Mammary epithelial cell (primary cell): ENCODE measurements at regions of chr2 and their contacts with region 1.

Region 1: DNA sequence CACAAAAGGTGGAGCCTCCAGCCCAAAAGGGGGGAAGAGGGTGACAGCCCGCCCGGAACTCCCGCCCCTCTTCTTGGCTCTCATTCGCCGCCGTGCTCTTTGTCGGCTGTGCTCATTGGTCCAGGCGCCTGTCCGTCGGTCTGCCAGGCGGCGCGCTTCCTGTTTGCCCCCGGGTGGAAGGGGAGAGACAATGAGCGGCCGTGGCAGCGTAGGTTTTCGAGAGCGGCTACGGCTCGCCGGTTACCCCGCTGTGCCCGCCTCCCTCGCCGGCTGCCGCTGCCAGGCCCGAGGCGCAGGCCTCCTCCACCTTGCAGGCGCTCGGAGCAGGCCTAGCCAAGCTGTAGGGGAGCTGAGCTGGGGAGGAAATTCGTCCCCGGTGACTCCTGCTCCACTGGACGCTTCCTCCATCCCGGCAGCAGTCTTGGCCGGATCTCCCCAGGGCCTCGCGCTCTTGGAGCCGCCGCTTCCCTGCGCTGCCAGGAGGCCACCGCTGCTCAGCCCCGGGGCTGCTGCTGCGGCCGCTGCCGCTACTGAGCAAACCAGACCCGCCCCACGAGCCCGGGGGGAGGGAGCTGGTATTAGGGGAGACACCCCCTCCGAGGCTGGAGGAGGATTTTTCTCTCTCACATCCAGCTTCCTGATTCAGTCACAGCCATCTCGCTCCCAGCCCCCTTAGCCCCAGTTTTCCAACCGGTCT is at the start of gene SP3:
- DNase-seq: peak; percentile 97
- H3K4me3 ChIP-seq: peak within 1 kb of the TSS; percentile 73 to 96 (median 94)
- H3K27ac ChIP-seq: peak within 1 kb of the TSS; percentile 81
- H3K4me1 ChIP-seq: peaks cover 19% of the 10 kb centered on the region
- H3K27me3 ChIP-seq: no peaks in the 10 kb centered on the region
- CTCF ChIP-seq: no peak
- total RNA-seq, gene SP3: 64.1 to 79.5 TPM

Region 2: GRCh38 chr2:173708806-173709205 is 256.7 kb before region 1 on chr2:
- CTCF ChIA-PET with region 1: no interaction called
- dilution Hi-C with region 1: no loop called
- in situ Hi-C with region 1: no loop called
- intact Hi-C with region 1: no loop called
- DNase-seq: no peak
- H3K4me3 ChIP-seq: no peak overlapping the region
- H3K27ac ChIP-seq: no peak overlapping the region
- H3K4me1 ChIP-seq: no peaks in the 10 kb centered on the region
- H3K27me3 ChIP-seq: no peaks in the 10 kb centered on the region
- CTCF ChIP-seq: no peak

Region 3: DNA sequence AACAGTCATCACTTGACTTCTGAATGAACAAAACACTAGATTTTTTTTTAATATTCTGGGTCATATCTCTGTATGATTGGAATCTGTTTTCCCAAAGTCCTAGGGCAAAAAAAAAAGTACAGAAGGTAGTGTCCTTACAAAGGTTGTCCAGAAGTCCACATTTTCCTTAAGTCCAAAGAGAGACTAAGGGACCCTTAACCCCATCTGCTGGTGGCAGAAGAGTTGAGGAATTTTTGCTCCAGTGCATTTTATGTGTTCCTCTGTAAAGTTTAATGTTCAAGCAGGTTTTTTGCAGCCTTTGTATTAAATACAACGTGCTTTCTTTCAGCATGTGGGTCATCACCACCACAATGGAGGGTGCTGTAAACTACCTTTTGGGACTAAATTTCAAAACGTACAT is 216.2 kb before region 1 on chr2:
- CTCF ChIA-PET with region 1: no interaction called
- dilution Hi-C with region 1: no loop called
- in situ Hi-C with region 1: no loop called
- intact Hi-C with region 1: loop called (anchors 5 kb)
- DNase-seq: peak; percentile 6
- H3K4me3 ChIP-seq: no peak overlapping the region
- H3K27ac ChIP-seq: no peak overlapping the region
- H3K4me1 ChIP-seq: no peaks in the 10 kb centered on the region
- H3K27me3 ChIP-seq: no peaks in the 10 kb centered on the region
- CTCF ChIP-seq: peak in 1 of 2 donors; percentile 52

Region 4: DNA sequence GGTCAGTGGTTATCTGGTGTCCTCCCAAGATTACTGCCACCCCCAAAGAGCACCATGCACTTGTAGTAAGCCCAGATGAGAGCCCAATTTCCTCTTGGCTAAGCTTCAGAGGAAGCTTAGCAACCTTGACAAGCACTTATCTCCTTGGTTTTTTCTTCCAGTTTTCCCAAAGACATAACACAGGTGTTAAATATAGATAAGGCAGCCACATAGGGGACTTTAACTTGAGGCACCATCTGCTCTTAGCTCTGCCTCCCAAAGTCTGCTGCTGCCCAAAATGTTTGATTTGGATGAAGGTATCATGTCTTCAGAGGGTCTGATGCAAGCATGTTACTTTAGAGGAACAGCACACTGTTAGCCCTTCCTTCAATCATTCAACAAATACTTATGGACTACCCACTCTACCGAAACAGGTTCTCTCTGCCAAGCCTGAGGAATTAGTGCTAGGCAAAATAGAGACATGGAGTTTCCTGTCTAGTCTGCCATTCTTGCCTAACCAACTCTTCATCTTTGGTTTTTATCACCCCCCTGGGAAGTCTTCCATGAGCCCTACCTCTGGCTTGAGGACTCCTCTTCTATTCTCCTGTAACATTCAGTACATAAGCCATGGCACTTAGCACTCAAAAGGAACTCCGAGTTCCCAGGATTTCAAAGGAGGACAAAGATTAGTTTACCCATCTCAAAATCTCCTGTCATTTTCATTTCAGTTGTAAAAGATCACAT is 74.0 kb before region 1 on chr2:
- CTCF ChIA-PET with region 1: no interaction called
- dilution Hi-C with region 1: no loop called
- in situ Hi-C with region 1: no loop called
- intact Hi-C with region 1: loop called (anchors 5 kb)
- DNase-seq: no peak
- H3K4me3 ChIP-seq: no peak overlapping the region
- H3K27ac ChIP-seq: no peak overlapping the region
- H3K4me1 ChIP-seq: no peaks in the 10 kb centered on the region
- H3K27me3 ChIP-seq: no peaks in the 10 kb centered on the region
- CTCF ChIP-seq: no peak

Region 5: GRCh38 chr2:173948842-173949241 is 16.6 kb before region 1 on chr2:
- CTCF ChIA-PET with region 1: no interaction called
- dilution Hi-C with region 1: no loop called
- in situ Hi-C with region 1: no loop called
- intact Hi-C with region 1: loop called (anchors 2 kb)
- DNase-seq: no peak
- H3K4me3 ChIP-seq: no peak overlapping the region
- H3K27ac ChIP-seq: no peak overlapping the region
- H3K4me1 ChIP-seq: no peaks in the 10 kb centered on the region
- H3K27me3 ChIP-seq: no peaks in the 10 kb centered on the region
- CTCF ChIP-seq: no peak

Region 6: GRCh38 chr2:173978447-173978846 is 13.0 kb after region 1 on chr2:
- CTCF ChIA-PET with region 1: no interaction called
- dilution Hi-C with region 1: no loop called
- in situ Hi-C with region 1: no loop called
- intact Hi-C with region 1: loop called (anchors 2 kb)
- DNase-seq: peak; percentile 80
- H3K4me3 ChIP-seq: no peak overlapping the region
- H3K27ac ChIP-seq: no peak overlapping the region
- H3K4me1 ChIP-seq: peaks cover 21% of the 10 kb centered on the region
- H3K27me3 ChIP-seq: no peaks in the 10 kb centered on the region
- CTCF ChIP-seq: no peak

Region 7: GRCh38 chr2:174023591-174024523 is 58.4 kb after region 1 on chr2:
- CTCF ChIA-PET with region 1: no interaction called
- dilution Hi-C with region 1: no loop called
- in situ Hi-C with region 1: loop called in 1 of 2 experiments (anchors 10 kb)
- intact Hi-C with region 1: loop called (anchors 1 kb)
- DNase-seq: peak; percentile 100
- H3K4me3 ChIP-seq: no peak overlapping the region
- H3K27ac ChIP-seq: peak overlapping the region; percentile 77
- H3K4me1 ChIP-seq: peaks cover 7% of the 10 kb centered on the region
- H3K27me3 ChIP-seq: no peaks in the 10 kb centered on the region
- CTCF ChIP-seq: no peak

Region 8: GRCh38 chr2:174039551-174040416 is 74.3 kb after region 1 on chr2:
- CTCF ChIA-PET with region 1: no interaction called
- dilution Hi-C with region 1: no loop called
- in situ Hi-C with region 1: no loop called
- intact Hi-C with region 1: loop called (anchors 1 kb)
- DNase-seq: peak; percentile 90
- H3K4me3 ChIP-seq: peak overlapping the region in 1 of 3 experiments; percentile 14
- H3K27ac ChIP-seq: peak overlapping the region; percentile 69
- H3K4me1 ChIP-seq: peaks cover 17% of the 10 kb centered on the region
- H3K27me3 ChIP-seq: no peaks in the 10 kb centered on the region
- CTCF ChIP-seq: peak; percentile 80 to 93

Region 9: GRCh38 chr2:174217869-174218268 is 252.4 kb after region 1 on chr2:
- CTCF ChIA-PET with region 1: no interaction called
- dilution Hi-C with region 1: no loop called
- in situ Hi-C with region 1: no loop called
- intact Hi-C with region 1: no loop called
- DNase-seq: no peak
- H3K4me3 ChIP-seq: no peak overlapping the region
- H3K27ac ChIP-seq: no peak overlapping the region
- H3K4me1 ChIP-seq: no peaks in the 10 kb centered on the region
- H3K27me3 ChIP-seq: no peaks in the 10 kb centered on the region
- CTCF ChIP-seq: no peak